Activated CD4-positive, alpha-beta memory T cell treated with anti-CD3 and anti-CD28 coated beads for 36 hours (primary cell): ENCODE measurements at regions of chr5 and their contacts with region 1.

Region 1: GRCh38 chr5:55936100-55936693 is 58.6 kb downstream of the IL6ST start:
- DNase-seq: peak; percentile 88
- H3K4me3 Mint-ChIP-seq: no peak overlapping the region
- H3K27ac Mint-ChIP-seq: peak overlapping the region; percentile 21
- H3K4me1 Mint-ChIP-seq: peaks cover 9% of the 10 kb centered on the region
- H3K27me3 Mint-ChIP-seq: no peaks in the 10 kb centered on the region

Region 2: GRCh38 chr5:55923177-55923771 is 12.9 kb before region 1 on chr5:
- CTCF ChIA-PET with region 1: interaction called, 23 read pairs
- POLR2A ChIA-PET with region 1: no interaction called
- intact Hi-C with region 1: no loop called
- DNase-seq: peak; percentile 34
- H3K4me3 Mint-ChIP-seq: peak overlapping the region; percentile 77
- H3K27ac Mint-ChIP-seq: no peak overlapping the region
- H3K4me1 Mint-ChIP-seq: peaks cover 23% of the 10 kb centered on the region
- H3K27me3 Mint-ChIP-seq: no peaks in the 10 kb centered on the region

Region 3: DNA sequence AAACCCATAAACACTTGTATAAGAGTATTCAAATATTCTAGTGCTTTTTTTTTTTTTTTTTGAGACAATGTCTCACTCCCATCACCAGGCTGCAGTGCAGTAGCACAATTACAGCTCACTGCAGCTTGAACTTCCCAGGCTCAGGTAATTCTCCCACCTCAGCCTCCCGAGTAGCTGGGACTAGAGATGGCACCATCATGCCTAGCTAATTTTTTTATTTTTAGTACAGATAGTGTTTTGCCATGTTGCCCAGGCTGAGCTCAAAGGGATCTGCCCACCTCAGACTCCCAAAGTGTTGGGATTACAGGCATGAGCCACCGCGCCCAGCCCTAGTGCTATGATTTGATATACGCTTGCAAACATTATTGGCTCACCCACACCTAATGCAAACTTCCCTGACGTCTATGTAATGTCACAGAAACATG is 46.8 kb after region 1 on chr5:
- CTCF ChIA-PET with region 1: interaction called, 6 read pairs
- POLR2A ChIA-PET with region 1: no interaction called
- intact Hi-C with region 1: loop called (anchors 5 kb)
- DNase-seq: no peak
- H3K4me3 Mint-ChIP-seq: peak overlapping the region; percentile 20
- H3K27ac Mint-ChIP-seq: peak overlapping the region; percentile 64
- H3K4me1 Mint-ChIP-seq: peaks cover 80% of the 10 kb centered on the region
- H3K27me3 Mint-ChIP-seq: no peaks in the 10 kb centered on the region

Region 4: GRCh38 chr5:56012281-56012963 is 76.2 kb after region 1 on chr5:
- CTCF ChIA-PET with region 1: no interaction called
- POLR2A ChIA-PET with region 1: no interaction called
- intact Hi-C with region 1: no loop called
- DNase-seq: peak; percentile 61
- H3K4me3 Mint-ChIP-seq: peak overlapping the region; percentile 31
- H3K27ac Mint-ChIP-seq: peak overlapping the region; percentile 81
- H3K4me1 Mint-ChIP-seq: peaks cover 30% of the 10 kb centered on the region
- H3K27me3 Mint-ChIP-seq: no peaks in the 10 kb centered on the region

Region 5: DNA sequence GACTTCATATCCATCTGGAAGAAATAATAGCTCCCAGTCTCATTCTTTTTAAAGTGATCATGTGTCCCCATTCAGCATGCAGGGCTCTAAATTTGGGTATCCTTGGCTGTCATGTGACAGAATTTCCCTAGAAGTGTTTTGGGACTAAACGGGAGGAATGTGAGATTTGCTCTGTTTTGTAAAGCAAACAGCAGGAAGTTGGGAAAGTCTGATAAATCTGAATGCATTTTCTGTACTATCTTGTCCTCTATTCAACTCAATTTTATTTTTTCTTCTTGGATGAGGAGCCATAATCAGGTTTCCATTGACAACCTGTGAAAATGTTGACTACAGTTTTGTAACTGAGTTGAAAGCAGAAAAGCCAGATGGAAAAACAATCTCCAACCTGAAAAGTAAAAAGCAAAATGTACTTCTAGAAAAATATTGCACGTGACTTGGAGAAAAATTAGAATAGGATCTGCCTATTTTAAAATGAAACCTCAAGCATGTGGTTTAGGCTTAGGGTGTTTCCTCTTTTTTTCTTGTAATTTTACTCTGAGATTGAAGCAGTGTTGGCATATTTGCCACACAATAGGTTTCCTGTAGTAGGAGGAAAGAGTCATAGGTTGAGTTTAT is 134.8 kb after region 1 on chr5:
- CTCF ChIA-PET with region 1: no interaction called
- POLR2A ChIA-PET with region 1: no interaction called
- intact Hi-C with region 1: loop called (anchors 5 kb)
- DNase-seq: no peak
- H3K4me3 Mint-ChIP-seq: no peak overlapping the region
- H3K27ac Mint-ChIP-seq: peak overlapping the region; percentile 50
- H3K4me1 Mint-ChIP-seq: peaks cover 55% of the 10 kb centered on the region
- H3K27me3 Mint-ChIP-seq: no peaks in the 10 kb centered on the region

Region 6: DNA sequence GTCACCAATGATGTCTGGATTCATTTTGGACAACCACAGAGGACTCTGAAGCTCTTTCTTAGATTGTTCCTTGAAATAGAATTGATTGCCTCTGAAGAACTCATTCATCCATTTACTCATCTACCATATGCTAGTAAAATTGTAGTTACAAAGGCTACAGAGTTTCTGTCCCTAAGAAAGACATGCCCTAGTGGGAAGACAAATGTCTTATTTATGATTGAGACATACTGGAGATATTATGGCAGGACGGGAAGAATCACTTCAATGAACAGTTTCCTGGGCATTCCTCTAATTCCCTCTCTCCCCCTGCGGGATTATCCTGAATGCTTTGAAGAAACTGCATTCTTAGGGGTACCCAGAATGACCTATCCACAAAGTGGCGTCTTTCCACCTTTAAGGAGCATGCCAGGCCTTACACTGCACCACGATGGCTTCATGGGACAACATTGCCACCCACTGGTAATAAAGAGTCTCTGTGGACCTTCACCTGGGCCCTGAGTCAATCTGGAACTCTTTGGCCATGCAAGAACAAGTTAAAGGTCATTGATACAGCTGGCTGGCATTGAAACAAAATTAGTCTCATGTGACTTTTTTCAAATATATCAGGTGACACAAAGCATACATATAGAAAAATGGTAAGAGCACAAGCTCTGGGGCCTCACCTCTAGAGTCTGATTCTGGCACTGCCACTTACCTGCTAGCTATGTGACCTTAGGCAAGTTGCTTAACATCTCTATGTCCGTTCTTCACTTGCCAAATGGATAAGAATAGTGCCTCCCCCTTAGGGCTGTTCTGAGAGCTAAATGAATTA is 264.9 kb after region 1 on chr5:
- CTCF ChIA-PET with region 1: interaction called, 126 read pairs
- POLR2A ChIA-PET with region 1: no interaction called
- intact Hi-C with region 1: loop called (anchors 1 kb)
- DNase-seq: peak; percentile 72
- H3K4me3 Mint-ChIP-seq: no peak overlapping the region
- H3K27ac Mint-ChIP-seq: no peak overlapping the region
- H3K4me1 Mint-ChIP-seq: peaks cover 18% of the 10 kb centered on the region
- H3K27me3 Mint-ChIP-seq: no peaks in the 10 kb centered on the region